IMR-90 (cell line): ENCODE measurements at regions of chr12 and their contacts with region 1.

Region 1: GRCh38 chr12:19988948-19989347 is 379.4 kb upstream of the PDE3A start:
- DNase-seq: no peak
- ATAC-seq: no peak
- H3K4me3 ChIP-seq: no peak overlapping the region
- H3K27ac ChIP-seq: no peak overlapping the region
- H3K4me1 ChIP-seq: peaks cover 3% of the 10 kb centered on the region
- H3K27me3 ChIP-seq: no peaks in the 10 kb centered on the region
- CTCF ChIP-seq: no peak
- POLR2A ChIP-seq: no peak
- RAD21 ChIP-seq: no peak

Region 2: GRCh38 chr12:19850346-19851065 is 138.4 kb before region 1 on chr12:
- CTCF ChIA-PET with region 1: no interaction called
- POLR2A ChIA-PET with region 1: no interaction called
- dilution Hi-C with region 1: no loop called
- in situ Hi-C with region 1: no loop called
- intact Hi-C with region 1: no loop called
- DNase-seq: peak; percentile 53
- ATAC-seq: peak; percentile 43
- H3K4me3 ChIP-seq: no peak overlapping the region
- H3K27ac ChIP-seq: peak overlapping the region; percentile 28; the same call in 1 of the 2 replicates
- H3K4me1 ChIP-seq: peaks cover 11% of the 10 kb centered on the region
- H3K27me3 ChIP-seq: no peaks in the 10 kb centered on the region
- CTCF ChIP-seq: no peak
- POLR2A ChIP-seq: no peak
- RAD21 ChIP-seq: no peak

Region 3: GRCh38 chr12:19924360-19924759 is 64.6 kb before region 1 on chr12:
- CTCF ChIA-PET with region 1: no interaction called
- POLR2A ChIA-PET with region 1: interaction called, 12 read pairs
- dilution Hi-C with region 1: no loop called
- in situ Hi-C with region 1: no loop called
- intact Hi-C with region 1: no loop called
- DNase-seq: no peak
- ATAC-seq: no peak
- H3K4me3 ChIP-seq: no peak overlapping the region
- H3K27ac ChIP-seq: no peak overlapping the region
- H3K4me1 ChIP-seq: no peaks in the 10 kb centered on the region
- H3K27me3 ChIP-seq: no peaks in the 10 kb centered on the region
- CTCF ChIP-seq: no peak
- POLR2A ChIP-seq: no peak
- RAD21 ChIP-seq: no peak

Region 4: GRCh38 chr12:20011200-20011599 is 22.3 kb after region 1 on chr12:
- CTCF ChIA-PET with region 1: no interaction called
- POLR2A ChIA-PET with region 1: no interaction called
- dilution Hi-C with region 1: no loop called
- in situ Hi-C with region 1: no loop called
- intact Hi-C with region 1: no loop called
- DNase-seq: no peak
- ATAC-seq: no peak
- H3K4me3 ChIP-seq: no peak overlapping the region
- H3K27ac ChIP-seq: no peak overlapping the region
- H3K4me1 ChIP-seq: no peaks in the 10 kb centered on the region
- H3K27me3 ChIP-seq: no peaks in the 10 kb centered on the region
- CTCF ChIP-seq: no peak
- POLR2A ChIP-seq: no peak
- RAD21 ChIP-seq: no peak

Region 5: DNA sequence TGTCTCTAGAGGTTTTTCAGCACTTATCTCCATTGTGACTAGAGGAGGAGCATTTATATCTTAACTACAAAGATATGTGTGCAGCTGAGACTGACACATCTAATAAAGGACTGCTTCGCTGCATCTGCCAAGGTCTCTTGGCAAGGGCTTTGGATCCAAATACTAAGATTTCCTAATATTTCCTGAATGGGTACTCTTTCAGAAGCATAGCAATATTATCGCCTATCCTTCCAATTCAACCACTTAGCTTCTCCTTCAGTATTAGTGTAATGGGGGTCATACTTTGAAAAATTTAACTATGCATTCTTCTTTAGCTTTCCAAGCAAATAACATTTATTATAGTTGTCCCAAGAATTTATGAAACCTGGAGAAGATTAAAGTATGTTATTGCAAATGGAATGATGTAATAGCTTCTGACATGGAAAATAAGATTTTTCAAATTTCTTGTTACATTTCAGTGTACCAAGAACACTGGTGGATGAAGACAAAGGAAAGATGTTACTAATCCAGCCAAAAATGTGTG is 136.4 kb after region 1 on chr12:
- CTCF ChIA-PET with region 1: no interaction called
- POLR2A ChIA-PET with region 1: no interaction called
- dilution Hi-C with region 1: no loop called
- in situ Hi-C with region 1: no loop called
- intact Hi-C with region 1: no loop called
- DNase-seq: no peak
- ATAC-seq: no peak
- H3K4me3 ChIP-seq: no peak overlapping the region
- H3K27ac ChIP-seq: no peak overlapping the region
- H3K4me1 ChIP-seq: peaks cover 2% of the 10 kb centered on the region; the same call in 1 of the 2 replicates
- H3K27me3 ChIP-seq: no peaks in the 10 kb centered on the region
- CTCF ChIP-seq: no peak
- POLR2A ChIP-seq: no peak
- RAD21 ChIP-seq: no peak